PC-9 (cell line): ENCODE measurements at regions of chr9 and their contacts with region 1.

Region 1: GRCh38 chr9:135255033-135255840 is 167.8 kb downstream of the OLFM1 start:
- DNase-seq: no peak
- H3K4me3 ChIP-seq: no peak overlapping the region
- H3K27ac ChIP-seq: no peak overlapping the region
- H3K4me1 ChIP-seq: no peaks in the 10 kb centered on the region
- H3K27me3 ChIP-seq: peaks cover 78% of the 10 kb centered on the region
- CTCF ChIP-seq: no peak

Region 2: DNA sequence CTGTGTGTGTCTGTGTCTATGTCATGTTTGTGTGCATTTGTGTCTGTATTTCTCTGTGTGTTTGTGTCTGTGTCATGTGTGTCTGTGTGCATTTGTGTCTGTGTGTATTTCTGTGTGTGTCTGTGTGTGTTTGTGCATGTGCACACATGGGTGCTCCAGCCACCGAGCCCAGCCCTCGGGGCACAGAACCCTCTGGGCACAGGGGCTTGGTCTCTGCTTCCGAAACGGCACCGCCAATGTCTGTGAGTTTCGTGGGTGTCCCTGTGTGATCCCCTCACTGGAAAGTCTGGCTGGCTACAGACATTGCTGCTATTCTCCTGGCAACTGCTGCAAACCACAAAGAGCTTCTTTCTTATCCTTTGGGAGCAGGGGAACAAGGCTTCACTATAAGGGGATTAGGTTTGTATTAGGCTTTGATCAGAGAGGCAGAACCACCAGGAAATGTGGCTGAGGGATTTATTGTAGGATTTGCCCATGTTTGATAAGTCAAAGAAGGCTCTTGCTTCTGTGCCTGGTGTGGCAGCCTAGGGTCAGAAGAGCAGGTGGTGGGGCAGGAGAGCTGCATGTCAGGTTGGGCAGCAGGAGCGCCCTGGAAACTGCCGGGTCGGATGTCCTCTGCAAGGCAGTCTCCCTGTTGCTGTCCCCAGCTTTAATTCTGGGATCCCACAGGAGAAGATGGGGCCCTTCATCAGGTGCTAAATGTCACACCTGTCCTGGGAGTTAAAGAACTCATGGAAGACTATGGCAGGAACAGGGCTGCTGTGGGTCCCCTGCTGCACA is 297.9 kb before region 1 on chr9:
- CTCF ChIA-PET with region 1: no interaction called
- POLR2A ChIA-PET with region 1: interaction called, 21 read pairs
- intact Hi-C with region 1: no loop called
- DNase-seq: no peak
- H3K4me3 ChIP-seq: no peak overlapping the region
- H3K27ac ChIP-seq: no peak overlapping the region
- H3K4me1 ChIP-seq: no peaks in the 10 kb centered on the region
- H3K27me3 ChIP-seq: peaks cover 84% of the 10 kb centered on the region
- CTCF ChIP-seq: no peak